ENCODE measurements at regions of chr15 and their contacts with region 1.

Region 1: GRCh38 chr15:91956026-91956723 is 102.7 kb downstream of the SLCO3A1 start:
- DNase-seq: peak; percentile 36
- H3K4me3 ChIP-seq: no peak overlapping the region
- H3K27ac ChIP-seq: peak overlapping the region; percentile 33 to 36
- H3K4me1 ChIP-seq: no peaks in the 10 kb centered on the region
- H3K27me3 ChIP-seq: no peaks in the 10 kb centered on the region
- CTCF ChIP-seq: no peak
- POLR2A ChIP-seq: no peak

Region 2: DNA sequence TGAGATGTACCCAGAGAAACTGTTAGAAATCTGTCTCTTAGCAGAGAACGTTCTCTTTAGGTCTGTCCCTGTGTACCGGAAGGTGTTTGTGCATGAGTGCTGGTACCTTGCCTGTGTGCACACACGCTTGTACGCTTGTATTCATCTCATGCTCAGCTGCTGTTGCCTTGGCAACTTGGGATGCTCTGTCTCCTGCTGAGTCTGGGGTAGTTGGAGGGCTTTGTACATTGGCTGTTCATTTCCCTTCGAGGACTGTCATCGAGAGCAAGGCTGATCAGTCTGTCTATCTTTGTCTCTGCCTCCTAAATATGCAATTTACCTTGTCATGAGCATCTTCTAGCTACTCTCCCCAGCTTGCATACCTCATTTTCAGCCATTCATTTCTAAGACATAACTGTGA is 44.5 kb after region 1 on chr15:
- intact Hi-C with region 1: loop called (anchors 2 kb)
- DNase-seq: no peak
- H3K4me3 ChIP-seq: no peak overlapping the region
- H3K27ac ChIP-seq: no peak overlapping the region
- H3K4me1 ChIP-seq: no peaks in the 10 kb centered on the region
- H3K27me3 ChIP-seq: no peaks in the 10 kb centered on the region
- CTCF ChIP-seq: no peak
- POLR2A ChIP-seq: no peak

Measured in prostate gland (tissue), 2 donors.